OCI-LY7 (cell line): ENCODE measurements at regions of chr1 and their contacts with region 1.

Region 1: DNA sequence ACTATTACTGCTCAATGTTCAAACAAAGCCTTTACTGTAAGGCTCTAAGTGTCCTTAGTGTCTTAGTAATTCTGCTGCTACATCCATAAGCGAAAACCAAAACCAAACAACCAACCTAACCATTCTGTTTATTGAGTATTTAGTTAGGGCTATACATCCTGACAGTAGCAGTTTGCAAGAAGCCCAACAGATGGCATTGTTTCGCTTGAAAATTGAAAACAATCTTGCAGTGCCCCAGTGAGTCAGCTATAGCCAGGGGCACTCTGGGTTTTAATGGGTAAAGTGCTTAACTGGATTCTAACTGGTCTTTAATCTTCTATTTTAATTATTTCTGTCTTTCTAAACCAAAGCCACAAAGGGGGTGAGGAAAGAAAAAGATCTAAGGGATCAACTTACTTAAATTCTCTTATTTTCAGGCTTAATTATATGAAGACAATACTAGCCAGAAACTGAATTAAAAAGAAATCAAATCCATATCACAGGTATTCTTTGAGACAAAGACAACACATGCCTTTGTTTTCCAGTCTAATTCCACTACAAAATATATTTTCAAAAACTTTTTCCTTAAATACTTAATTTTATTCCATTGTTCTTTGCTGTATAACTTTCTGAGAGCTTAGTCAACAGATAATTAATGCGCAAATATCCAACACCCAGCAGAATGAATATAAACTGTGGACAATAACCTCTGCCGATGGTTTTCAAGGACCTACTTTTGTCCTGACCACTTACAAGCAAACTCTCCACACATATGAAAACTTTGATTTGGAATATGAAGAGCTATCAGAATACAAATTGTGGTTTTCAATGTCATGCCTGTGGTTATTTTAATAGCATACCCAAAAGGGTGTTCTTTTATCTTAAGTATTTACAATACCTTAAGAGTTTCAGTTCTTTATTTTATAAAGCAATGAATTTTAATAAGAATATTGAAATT is 15.2 kb downstream of the POGZ start:
- DNase-seq: peak; percentile 80
- H3K4me3 ChIP-seq: peak overlapping the region; percentile 58
- H3K27ac ChIP-seq: peak overlapping the region; percentile 74
- H3K4me1 ChIP-seq: peaks cover 55% of the 10 kb centered on the region
- CTCF ChIP-seq: peak; percentile 96

Region 2: DNA sequence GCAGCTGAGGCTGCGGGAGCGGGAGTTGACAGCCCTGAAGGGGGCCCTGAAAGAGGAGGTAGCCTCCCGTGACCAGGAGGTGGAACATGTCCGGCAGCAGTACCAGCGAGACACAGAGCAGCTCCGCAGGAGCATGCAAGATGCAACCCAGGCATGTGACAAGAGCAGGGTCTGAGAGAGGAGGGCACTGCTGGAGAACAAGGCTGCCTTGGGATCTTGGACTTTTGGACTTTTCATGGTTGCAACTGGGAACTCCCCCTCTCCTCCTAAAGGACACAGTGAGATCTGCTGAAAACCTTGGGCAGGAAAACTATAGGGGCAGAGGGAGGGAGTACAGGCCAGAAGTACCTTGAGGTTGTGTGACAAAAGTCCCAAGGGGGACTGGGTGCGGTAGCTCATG is 80.6 kb after region 1 on chr1:
- CTCF ChIA-PET with region 1: no interaction called
- POLR2A ChIA-PET with region 1: no interaction called
- intact Hi-C with region 1: no loop called
- DNase-seq: no peak
- H3K4me3 ChIP-seq: no peak overlapping the region
- H3K27ac ChIP-seq: no peak overlapping the region
- H3K4me1 ChIP-seq: no peaks in the 10 kb centered on the region
- CTCF ChIP-seq: no peak

Region 3: GRCh38 chr1:151534665-151535278 is 90.7 kb after region 1 on chr1:
- CTCF ChIA-PET with region 1: no interaction called
- POLR2A ChIA-PET with region 1: no interaction called
- intact Hi-C with region 1: loop called (anchors 1 kb)
- DNase-seq: peak; percentile 70
- H3K4me3 ChIP-seq: no peak overlapping the region
- H3K27ac ChIP-seq: no peak overlapping the region
- H3K4me1 ChIP-seq: no peaks in the 10 kb centered on the region
- CTCF ChIP-seq: peak; percentile 97

Region 4: DNA sequence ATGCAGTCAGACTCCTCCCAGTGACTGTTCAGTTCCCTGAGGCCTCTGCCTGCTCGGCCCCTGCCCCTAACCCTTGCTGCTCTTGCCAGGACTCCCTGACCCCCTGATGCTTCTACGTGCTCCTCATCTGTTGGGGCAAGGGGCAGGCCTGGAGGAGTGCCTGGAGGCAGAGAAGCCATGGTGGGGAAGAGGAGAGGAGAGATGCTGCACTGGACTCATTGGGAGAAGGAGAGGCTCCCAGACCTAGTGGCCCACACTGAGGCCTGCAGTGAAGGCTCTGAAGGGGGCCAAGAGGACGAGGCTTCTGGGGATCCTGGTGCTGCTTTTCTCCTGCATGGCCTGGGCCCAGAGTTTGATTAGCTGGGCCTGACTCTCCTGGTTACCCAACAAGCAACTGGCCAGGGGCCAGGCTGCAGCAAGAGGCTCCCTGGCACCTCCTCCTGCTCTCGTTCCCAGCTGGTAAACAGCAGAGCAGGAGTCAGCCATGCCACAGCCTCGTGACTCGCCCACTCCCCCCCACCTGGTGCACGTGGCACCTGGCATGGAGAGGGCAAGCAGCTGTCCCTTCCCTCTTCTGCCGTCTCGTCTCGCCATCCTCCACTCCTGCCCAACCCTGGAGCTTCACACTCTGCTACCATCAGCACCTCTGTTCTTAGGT is 388.3 kb after region 1 on chr1:
- CTCF ChIA-PET with region 1: no interaction called
- POLR2A ChIA-PET with region 1: no interaction called
- intact Hi-C with region 1: loop called (anchors 5 kb)
- DNase-seq: no peak
- H3K4me3 ChIP-seq: no peak overlapping the region
- H3K27ac ChIP-seq: no peak overlapping the region
- H3K4me1 ChIP-seq: peaks cover 6% of the 10 kb centered on the region
- CTCF ChIP-seq: no peak